ENCODE measurements at regions of chr1 and their contacts with region 1.

Region 1: GRCh38 chr1:54996359-54996868 is 2.3 kb upstream of the BSND start:
- DNase-seq: peak; percentile 94

Region 2: GRCh38 chr1:54944610-54945544 is 51.5 kb before region 1 on chr1:
- intact Hi-C with region 1: loop called (anchors 2 to 5 kb)
- DNase-seq: peak; percentile 89

Region 3: GRCh38 chr1:54950369-54951163 is 45.8 kb before region 1 on chr1:
- intact Hi-C with region 1: loop called (anchors 2 to 5 kb)
- DNase-seq: peak; percentile 86

Region 4: GRCh38 chr1:56235909-56236510 is 1239.6 kb after region 1 on chr1:
- intact Hi-C with region 1: loop called in 1 of 2 experiments (anchors 5 kb)
- DNase-seq: no peak